Pancreas (tissue), 10 donors: ENCODE measurements at regions of chr12 and their contacts with region 1.

Region 1: DNA sequence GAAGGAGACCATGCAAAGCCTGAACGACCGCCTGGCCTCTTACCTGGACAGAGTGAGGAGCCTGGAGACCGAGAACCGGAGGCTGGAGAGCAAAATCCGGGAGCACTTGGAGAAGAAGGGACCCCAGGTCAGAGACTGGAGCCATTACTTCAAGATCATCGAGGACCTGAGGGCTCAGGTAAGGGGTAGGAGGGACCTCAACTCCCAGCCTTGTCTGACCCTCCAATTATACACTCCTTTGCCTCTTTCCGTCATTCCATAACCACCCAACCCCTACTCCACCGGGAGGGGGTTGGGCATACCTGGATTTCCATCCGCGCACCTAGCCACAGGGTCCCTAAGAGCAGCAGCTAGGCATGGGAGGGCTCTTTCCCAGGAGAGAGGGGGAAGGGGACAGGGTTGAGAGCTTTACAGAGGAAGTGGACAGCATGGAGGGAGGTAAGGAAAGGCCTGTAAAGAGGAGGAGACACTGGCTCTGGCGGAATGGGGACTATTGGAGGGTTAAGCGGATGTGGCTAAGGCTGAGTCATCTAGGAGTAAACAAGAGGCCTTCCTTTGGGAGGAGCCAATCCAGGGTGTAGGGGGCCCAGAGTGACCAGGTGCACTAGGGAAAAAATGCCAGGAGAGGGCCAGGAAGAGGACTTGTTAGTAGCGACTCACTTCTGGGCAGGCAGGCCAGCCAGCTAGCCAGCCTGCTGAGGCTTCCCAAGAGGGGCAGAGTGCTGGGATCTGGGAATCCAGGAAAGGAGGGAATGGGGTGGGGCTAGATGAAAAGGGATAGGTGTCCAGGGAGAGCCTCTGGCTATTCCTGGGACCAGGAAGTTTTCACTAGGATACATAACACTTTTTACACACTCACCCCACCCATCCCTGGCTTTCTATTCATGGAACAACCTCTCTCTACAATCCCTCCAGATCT is 754 bp downstream of the KRT18 start:
- DNase-seq: peak in 4 of 6 donors; percentile 81 to 91 (median 86)
- ATAC-seq: peak; percentile 72 to 85 (median 78)
- H3K4me3 ChIP-seq: peak overlapping the region; percentile 42 to 94 (median 71)
- H3K27ac ChIP-seq: peak overlapping the region; percentile 94 to 96 (median 95)
- H3K4me1 ChIP-seq: peaks cover 21 to 32% (median 22%) of the 10 kb centered on the region in 3 donors
- H3K27me3 ChIP-seq: no peaks in the 10 kb centered on the region
- CTCF ChIP-seq: no peak

Region 2: GRCh38 chr12:52884526-52885293 is 65.0 kb before region 1 on chr12:
- intact Hi-C with region 1: no loop called
- DNase-seq: peak; percentile 76 to 96 (median 88)
- ATAC-seq: peak; percentile 84 to 91 (median 90)
- H3K4me3 ChIP-seq: no peak overlapping the region
- H3K27ac ChIP-seq: peak overlapping the region; percentile 51 to 70 (median 61)
- H3K4me1 ChIP-seq: peaks cover 0 to 4% (median 0%) of the 10 kb centered on the region in 3 donors
- H3K27me3 ChIP-seq: no peaks in the 10 kb centered on the region
- CTCF ChIP-seq: peak; percentile 92 to 97 (median 94)

Region 3: GRCh38 chr12:52903285-52903854 is 46.3 kb before region 1 on chr12:
- intact Hi-C with region 1: loop called in 2 of 3 experiments (anchors 10 kb)
- DNase-seq: peak; percentile 73 to 88 (median 76)
- ATAC-seq: peak; percentile 20 to 55 (median 39)
- H3K4me3 ChIP-seq: peak overlapping the region; percentile 52 to 94 (median 82)
- H3K27ac ChIP-seq: peak overlapping the region; percentile 82 to 95 (median 94)
- H3K4me1 ChIP-seq: peaks cover 29 to 57% (median 51%) of the 10 kb centered on the region in 3 donors
- H3K27me3 ChIP-seq: no peaks in the 10 kb centered on the region
- CTCF ChIP-seq: no peak